ENCODE measurements at regions of chr5 and their contacts with region 1.

Region 1: GRCh38 chr5:39202597-39203274 is 16.6 kb downstream of the FYB1 start:
- DNase-seq: peak; percentile 55
- H3K4me3 Mint-ChIP-seq: peak overlapping the region; percentile 83
- H3K27ac Mint-ChIP-seq: peak overlapping the region; percentile 99
- H3K4me1 Mint-ChIP-seq: peaks cover 37% of the 10 kb centered on the region
- H3K27me3 Mint-ChIP-seq: no peaks in the 10 kb centered on the region

Region 2: DNA sequence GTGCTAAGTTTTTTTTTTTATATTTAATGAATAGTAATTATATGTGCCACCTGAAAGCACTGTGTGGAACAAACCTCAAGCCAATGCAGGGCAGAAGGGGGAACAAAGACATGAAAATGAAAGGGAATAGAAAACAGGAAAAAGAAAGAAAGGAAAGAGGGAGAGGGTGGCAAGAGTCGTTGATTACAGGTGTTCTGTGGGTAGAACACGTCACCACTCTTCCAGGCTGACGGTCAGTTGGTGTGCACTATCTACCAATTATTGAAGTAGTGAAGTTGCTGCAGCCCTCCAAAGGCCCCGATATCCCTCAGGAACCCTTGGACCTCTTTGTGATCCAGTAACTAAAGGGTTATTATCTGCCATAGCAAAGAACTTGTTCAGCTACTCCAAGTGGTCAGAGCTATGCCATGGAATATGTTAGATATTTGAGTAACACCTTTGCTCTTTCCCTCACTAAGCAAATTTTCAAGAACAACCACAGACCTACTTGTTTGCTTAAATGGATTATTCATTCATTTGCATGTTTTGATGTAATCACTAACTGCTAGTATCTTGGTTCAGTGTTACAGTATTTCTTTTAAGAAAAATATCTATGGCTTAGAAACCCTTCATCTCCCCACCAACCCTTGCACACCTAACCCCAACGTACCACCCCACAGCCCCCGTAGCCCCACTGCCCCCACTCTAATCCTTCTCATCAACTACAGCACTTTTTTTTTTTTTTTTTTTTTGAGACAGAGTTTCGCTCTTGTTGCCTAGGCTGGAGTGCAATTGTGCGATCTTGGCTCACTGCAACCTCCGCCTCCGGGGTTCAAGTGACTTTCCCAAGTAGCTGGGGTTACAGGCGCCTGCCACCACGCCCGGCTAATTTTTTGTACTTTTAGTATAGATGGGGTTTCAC is 14.7 kb before region 1 on chr5:
- CTCF ChIA-PET with region 1: interaction called, 11 read pairs
- intact Hi-C with region 1: loop called (anchors 1 kb)
- DNase-seq: peak; percentile 51
- H3K4me3 Mint-ChIP-seq: peak overlapping the region; percentile 71
- H3K27ac Mint-ChIP-seq: peak overlapping the region; percentile 98
- H3K4me1 Mint-ChIP-seq: peaks cover 83% of the 10 kb centered on the region
- H3K27me3 Mint-ChIP-seq: no peaks in the 10 kb centered on the region

Region 3: DNA sequence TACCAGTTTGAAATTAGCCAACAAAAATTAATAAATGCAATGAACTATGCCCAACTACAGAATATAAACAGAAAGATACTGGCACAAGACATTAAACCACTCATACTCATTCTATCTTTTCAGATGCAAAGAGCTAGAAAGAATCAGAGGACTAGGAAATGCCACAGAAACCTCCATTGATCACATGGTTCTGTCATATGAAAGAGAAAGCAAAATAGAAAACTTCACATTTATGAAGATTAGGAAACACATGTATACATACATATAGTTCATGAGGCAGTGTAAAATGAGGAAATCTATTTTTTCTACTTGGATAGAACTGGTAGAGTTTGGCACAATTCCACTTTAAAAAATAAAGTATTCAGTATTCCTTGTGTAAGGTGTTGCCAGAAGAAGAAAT is 1201.9 kb after region 1 on chr5:
- CTCF ChIA-PET with region 1: no interaction called
- intact Hi-C with region 1: loop called (anchors 5 kb)
- DNase-seq: no peak
- H3K4me3 Mint-ChIP-seq: peak overlapping the region; percentile 33
- H3K27ac Mint-ChIP-seq: peak overlapping the region; percentile 99
- H3K4me1 Mint-ChIP-seq: peaks cover 89% of the 10 kb centered on the region
- H3K27me3 Mint-ChIP-seq: no peaks in the 10 kb centered on the region

Measured in activated naive CD4-positive, alpha-beta T cell treated with anti-CD3 and anti-CD28 coated beads for 36 hours (primary cell).